ENCODE measurements at regions of chr5 and their contacts with region 1.

Region 1: DNA sequence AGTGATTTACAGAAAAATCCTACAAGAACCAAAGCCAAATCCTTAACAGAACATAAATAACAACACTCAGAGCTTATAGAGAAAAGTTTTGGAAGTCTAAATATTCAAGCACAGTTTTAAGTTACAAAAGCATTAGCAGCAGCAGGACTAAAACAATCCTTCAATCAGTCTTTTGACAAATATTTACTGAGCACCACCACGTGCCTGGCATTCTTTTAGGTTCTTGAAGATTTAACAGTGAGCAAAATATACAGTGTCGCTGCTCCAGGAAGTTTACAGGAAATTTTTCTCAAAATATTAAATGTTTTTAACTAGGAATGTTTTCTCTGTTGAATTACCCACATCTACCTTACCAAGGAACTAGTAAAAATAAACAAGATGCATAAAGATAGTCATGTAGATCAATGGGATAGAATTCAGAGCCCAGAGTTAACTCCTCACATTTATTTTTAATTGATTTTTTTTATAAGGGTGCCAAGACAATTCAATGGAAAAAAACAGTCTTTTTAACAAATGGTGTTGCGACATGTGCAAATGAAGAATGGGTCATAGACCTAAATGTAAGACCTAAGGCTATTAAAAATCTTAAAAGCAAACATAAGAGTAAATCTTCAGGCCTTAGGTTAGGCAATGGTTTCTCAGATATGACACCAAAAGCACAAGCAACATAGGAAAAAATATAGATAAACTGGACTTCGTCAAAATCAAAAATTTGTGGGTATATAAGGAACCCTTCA is 11.2 kb downstream of the EPB41L4A start:
- DNase-seq: no peak
- ATAC-seq: no peak
- H3K4me3 ChIP-seq: no peak overlapping the region
- H3K27ac ChIP-seq: no peak overlapping the region
- H3K4me1 ChIP-seq: no peaks in the 10 kb centered on the region
- H3K27me3 ChIP-seq: no peaks in the 10 kb centered on the region
- CTCF ChIP-seq: no peak

Region 2: DNA sequence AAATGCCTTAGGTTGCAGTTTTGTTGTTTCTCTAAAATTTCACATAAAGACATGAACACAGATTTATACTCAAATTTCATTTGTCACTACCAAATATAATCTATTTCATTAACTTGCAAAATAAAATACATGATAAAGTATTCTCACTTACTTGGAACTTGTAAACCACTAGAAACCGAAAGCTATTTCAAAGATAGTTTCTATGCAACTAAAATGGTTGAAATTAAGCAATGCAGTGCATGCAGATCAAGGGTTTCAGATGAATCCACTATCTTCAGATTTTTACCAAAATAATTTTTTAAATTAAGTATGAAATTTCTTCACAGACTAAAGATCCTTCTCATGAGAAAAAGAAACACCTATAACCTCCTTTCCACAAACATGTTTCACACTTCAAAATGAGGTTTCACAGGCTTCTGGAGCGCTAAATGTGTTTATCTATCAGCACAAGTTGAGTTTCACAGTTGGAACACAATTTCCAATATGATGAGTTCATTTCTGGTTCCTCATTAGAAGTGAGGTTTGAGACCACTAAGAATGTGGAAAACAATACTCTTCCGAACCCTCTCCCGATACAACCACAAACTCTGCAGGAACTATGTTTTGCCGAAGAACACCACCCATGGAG is 52.7 kb before region 1 on chr5:
- intact Hi-C with region 1: loop called in 1 of 2 experiments (anchors 5 kb)
- DNase-seq: no peak
- ATAC-seq: no peak
- H3K4me3 ChIP-seq: no peak overlapping the region
- H3K27ac ChIP-seq: no peak overlapping the region
- H3K4me1 ChIP-seq: no peaks in the 10 kb centered on the region
- H3K27me3 ChIP-seq: no peaks in the 10 kb centered on the region
- CTCF ChIP-seq: no peak